ENCODE measurements at regions of chr6 and their contacts with region 1.

Region 1: GRCh38 chr6:79869600-79870084 is 77.7 kb downstream of the ELOVL4 start:
- DNase-seq: peak; percentile 87
- ATAC-seq: peak; percentile 100
- H3K4me3 Mint-ChIP-seq: peak overlapping the region; percentile 30
- H3K27ac Mint-ChIP-seq: peak overlapping the region; percentile 62
- H3K4me1 Mint-ChIP-seq: peaks cover 11% of the 10 kb centered on the region
- H3K27me3 Mint-ChIP-seq: peaks cover 16% of the 10 kb centered on the region

Region 2: DNA sequence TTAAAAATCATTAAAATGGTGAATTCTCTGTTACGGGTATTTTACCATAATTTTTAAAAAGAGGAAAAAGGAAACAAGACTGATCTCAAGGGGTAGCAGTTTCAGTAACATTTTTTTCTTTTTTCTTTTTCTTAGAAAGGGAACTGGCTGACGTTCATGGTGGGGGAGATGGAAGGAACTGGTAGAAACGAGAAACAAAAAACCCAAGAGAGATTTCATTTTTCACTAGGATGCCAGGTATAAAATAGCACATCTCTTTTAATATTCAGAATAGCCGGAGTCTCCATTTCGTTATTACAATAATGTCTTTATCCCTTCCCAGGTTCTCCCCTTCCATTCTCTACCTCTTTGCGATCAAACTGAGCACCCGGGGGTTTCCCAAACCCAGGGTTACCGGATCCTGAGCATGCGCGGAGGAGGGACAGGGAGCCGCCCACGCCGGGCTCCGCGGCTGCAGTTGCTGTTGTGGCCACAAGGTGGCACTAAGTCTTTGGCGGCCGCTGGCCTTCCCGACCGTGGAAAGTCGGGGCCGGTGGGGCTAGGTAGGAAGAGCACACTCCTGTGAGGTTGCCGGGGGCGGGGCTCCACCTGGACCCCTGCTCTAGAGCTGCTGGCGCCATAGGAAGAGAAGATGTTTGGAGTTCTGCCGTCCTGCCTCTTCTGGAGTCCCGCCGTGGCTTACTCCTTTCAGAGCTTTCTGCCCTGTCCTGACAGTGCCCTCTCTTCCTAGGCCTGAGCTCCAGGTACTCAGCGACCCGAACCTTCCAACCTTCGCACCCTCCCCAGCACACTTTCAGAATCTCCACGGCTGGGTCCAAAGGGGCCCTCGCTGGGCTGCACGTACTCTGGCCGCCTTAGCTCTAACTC is 91.7 kb before region 1 on chr6:
- CTCF ChIA-PET with region 1: interaction called, 37 read pairs
- POLR2A ChIA-PET with region 1: no interaction called
- DNase-seq: peak; percentile 84
- ATAC-seq: peak; percentile 95
- H3K4me3 Mint-ChIP-seq: peak overlapping the region; percentile 67
- H3K27ac Mint-ChIP-seq: no peak overlapping the region
- H3K4me1 Mint-ChIP-seq: peaks cover 7% of the 10 kb centered on the region
- H3K27me3 Mint-ChIP-seq: peaks cover 4% of the 10 kb centered on the region

Region 3: DNA sequence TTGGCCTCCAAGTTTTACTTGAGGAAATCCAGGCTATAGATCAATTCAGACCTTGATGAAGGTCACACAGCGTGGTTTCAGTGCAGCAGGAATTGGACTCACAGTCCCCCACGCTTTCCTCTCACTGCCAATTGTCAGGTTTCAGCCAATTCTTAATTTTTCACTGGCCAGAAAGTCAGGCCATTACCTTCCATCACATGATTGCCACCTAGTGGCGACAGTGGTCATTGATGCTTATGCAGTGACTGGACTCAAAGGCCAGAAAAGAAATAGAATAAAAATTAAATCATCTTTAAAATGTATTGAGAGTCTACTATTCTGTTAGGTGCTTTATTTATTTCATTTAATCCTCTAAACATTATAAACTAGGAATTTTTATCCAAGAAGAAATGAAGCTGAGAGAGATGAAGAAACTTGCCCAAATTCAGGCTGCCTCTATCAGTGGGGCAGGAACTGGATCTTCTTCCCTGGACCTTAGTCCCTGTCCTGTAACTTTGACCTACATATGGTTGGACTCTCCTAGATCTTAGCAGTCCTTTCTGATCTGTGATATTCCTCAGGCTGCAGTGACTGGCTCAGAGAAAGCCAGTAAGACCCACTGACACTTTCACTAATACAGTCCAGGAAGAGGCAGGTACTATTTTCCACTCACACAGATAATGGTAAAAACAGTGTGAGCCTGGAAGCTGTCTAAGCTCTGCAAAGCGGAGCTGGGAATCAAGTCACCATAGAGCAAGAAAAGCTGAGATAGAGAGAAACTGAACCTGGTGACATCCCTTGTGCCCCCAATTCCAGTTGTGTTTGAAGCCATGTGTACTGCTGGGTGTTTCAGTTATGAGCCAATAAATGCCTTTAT is 55.6 kb before region 1 on chr6:
- CTCF ChIA-PET with region 1: interaction called, 10 read pairs
- POLR2A ChIA-PET with region 1: no interaction called
- DNase-seq: peak; percentile 70
- ATAC-seq: no peak
- H3K4me3 Mint-ChIP-seq: no peak overlapping the region
- H3K27ac Mint-ChIP-seq: no peak overlapping the region
- H3K4me1 Mint-ChIP-seq: no peaks in the 10 kb centered on the region
- H3K27me3 Mint-ChIP-seq: peaks cover 9% of the 10 kb centered on the region

Region 4: GRCh38 chr6:79855147-79855546 is 14.5 kb before region 1 on chr6:
- CTCF ChIA-PET with region 1: interaction called, 13 read pairs
- POLR2A ChIA-PET with region 1: no interaction called
- DNase-seq: no peak
- ATAC-seq: no peak
- H3K4me3 Mint-ChIP-seq: no peak overlapping the region
- H3K27ac Mint-ChIP-seq: no peak overlapping the region
- H3K4me1 Mint-ChIP-seq: no peaks in the 10 kb centered on the region
- H3K27me3 Mint-ChIP-seq: peaks cover 4% of the 10 kb centered on the region

Region 5: GRCh38 chr6:80094017-80094416 is 224.4 kb after region 1 on chr6:
- CTCF ChIA-PET with region 1: interaction called, 15 read pairs
- POLR2A ChIA-PET with region 1: no interaction called
- DNase-seq: peak; percentile 34
- ATAC-seq: no peak
- H3K4me3 Mint-ChIP-seq: no peak overlapping the region
- H3K27ac Mint-ChIP-seq: no peak overlapping the region
- H3K4me1 Mint-ChIP-seq: peaks cover 10% of the 10 kb centered on the region
- H3K27me3 Mint-ChIP-seq: peaks cover 15% of the 10 kb centered on the region

Measured in activated CD8-positive, alpha-beta T cell treated with anti-CD3 and anti-CD28 coated beads, Interleukin-2, amount 10 ng/mL, durations not matched to agents 7 days and 5 days (primary cell).